Right cardiac atrium (tissue), 5 donors: ENCODE measurements at regions of chr6 and their contacts with region 1.

Region 1: DNA sequence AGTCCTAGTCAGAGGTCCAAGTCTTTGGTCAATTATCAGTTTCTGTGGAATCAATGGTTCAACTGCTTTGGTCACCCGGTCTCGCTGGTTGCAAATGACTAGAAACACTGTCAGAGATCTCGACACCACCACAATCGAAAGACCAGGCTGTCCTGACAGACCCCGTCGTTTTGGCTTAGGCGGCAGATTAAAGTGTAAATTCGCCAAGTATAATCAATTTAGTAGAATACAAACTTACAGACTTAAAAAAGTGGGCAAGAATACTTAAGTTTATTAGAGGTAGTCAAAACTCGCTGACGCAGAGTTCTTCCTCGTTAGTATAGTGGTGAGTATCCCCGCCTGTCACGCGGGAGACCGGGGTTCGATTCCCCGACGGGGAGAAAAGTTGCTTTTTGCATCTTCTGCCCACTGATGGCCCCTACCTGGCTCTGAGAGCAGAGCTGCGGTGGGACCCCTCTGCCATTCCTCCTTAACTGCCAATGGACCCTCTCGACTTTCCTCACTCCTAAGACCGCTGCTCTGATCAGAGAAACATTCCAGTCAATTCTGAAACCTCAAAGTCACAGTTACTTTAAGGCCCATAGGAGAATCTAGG is 30.6 kb upstream of the ZNF184 start:
- DNase-seq: peak; percentile 54 to 82 (median 82)
- ATAC-seq: peak; percentile 85 to 91
- H3K4me3 ChIP-seq: peak overlapping the region; percentile 77
- H3K27ac ChIP-seq: peak overlapping the region; percentile 14
- H3K4me1 ChIP-seq: peaks cover 4% of the 10 kb centered on the region
- H3K27me3 ChIP-seq: no peaks in the 10 kb centered on the region

Region 2: DNA sequence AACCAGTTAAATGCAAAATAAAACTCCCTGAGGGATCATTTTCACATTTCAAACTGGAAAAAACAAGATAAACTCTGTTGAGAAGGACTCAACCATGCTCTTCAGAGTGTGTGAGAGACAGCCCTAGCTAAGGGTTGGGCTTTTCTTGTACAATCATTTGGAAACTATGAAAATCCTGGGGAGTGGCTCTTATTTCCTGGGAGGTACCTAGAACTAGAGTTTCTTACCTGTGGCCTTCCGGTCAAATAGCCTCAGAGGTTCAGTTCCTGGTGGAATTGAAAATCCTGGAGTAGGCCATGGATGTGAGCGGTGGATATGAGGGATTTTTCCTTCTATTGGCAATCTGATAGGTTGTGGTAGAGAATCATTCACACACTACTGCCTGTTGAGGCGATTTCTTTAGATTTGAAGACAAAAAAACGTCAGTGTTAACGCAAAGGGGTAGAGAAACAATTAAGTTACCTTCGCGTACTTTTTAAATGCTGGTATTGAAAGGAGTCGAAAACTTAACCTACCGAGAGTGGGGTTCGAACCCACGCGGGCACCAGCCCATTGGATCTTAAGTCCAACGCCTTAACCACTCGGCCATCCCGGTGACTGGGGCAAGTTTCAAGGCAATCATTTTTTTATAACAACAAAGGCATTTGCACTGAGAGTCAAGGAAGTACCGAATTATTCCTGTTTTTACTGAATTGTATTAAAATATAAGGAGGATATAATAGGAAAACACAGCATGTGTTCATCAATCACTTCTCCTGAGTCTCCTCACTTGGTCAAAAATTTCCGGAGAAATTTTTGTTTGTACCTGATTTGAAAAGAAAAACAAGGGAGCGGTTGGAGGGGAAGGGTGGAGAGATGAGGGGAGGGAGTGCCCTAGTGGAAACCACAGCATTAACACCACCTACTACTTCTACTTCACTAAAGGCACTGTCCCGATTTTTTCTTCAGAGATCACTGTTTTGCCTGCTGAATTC is 217.4 kb after region 1 on chr6:
- intact Hi-C with region 1: no loop called
- DNase-seq: no peak
- ATAC-seq: no peak
- H3K4me3 ChIP-seq: no peak overlapping the region
- H3K27ac ChIP-seq: no peak overlapping the region
- H3K4me1 ChIP-seq: no peaks in the 10 kb centered on the region
- H3K27me3 ChIP-seq: peaks cover 2% of the 10 kb centered on the region

Region 3: GRCh38 chr6:27902335-27903314 is 399.1 kb after region 1 on chr6:
- intact Hi-C with region 1: loop called in 1 of 4 experiments (anchors 10 kb)
- DNase-seq: peak; percentile 73 to 89 (median 87)
- ATAC-seq: peak; percentile 95 to 96
- H3K4me3 ChIP-seq: peak overlapping the region; percentile 58
- H3K27ac ChIP-seq: peak overlapping the region; percentile 60
- H3K4me1 ChIP-seq: no peaks in the 10 kb centered on the region
- H3K27me3 ChIP-seq: no peaks in the 10 kb centered on the region